ENCODE measurements at regions of chr6 and their contacts with region 1.

Region 1: GRCh38 chr6:111709615-111710398 is 104.1 kb upstream of the TRAF3IP2 start:
- DNase-seq: peak; percentile 70
- ATAC-seq: peak; percentile 82
- H3K4me3 Mint-ChIP-seq: no peak overlapping the region
- H3K27ac Mint-ChIP-seq: peak overlapping the region; percentile 73
- H3K4me1 Mint-ChIP-seq: peaks cover 47% of the 10 kb centered on the region
- H3K27me3 Mint-ChIP-seq: no peaks in the 10 kb centered on the region

Region 2: DNA sequence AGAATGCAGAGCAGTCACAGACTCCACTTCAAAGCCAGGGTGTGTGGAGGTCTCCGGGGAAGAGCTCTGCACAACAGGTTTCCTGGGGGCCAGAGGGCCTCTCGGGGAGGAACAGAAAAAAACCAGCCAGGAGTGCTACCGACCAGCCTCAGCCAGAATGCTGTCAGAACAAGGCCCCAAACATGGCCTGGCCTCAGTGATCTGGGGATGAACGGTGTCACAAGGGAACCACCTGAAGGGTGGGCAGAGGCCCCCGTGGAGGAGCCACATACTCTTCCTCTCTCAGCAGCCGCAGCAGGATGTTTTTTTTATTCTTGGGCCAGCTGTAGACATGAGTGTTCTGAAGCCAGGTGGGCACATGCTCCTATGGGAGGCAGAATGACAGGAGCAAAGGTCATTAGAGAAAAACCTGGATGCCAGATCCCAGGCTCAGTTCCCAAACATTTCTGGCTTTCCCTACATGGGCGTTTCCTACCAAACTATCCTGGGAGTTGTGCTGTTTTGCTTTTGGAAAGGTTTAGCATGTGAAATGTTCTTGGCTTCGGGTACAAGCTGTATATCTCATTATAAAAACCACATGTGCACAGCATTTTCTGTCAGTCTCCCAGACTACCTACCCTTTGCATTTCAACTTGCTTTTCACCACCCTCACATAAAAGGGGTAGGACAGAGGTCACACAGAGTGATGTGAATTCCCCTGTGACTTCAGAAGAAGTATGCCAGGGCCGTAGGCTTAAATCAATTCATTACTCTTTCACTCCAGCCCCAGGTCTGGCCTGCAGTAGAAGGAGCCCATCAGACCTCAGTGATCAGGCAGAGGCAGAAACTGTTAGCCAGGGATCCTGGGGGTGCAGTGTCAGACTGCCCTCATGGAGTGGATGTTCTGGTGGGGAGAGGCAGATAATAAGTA is 150.4 kb before region 1 on chr6:
- CTCF ChIA-PET with region 1: no interaction called
- DNase-seq: no peak
- ATAC-seq: no peak
- H3K4me3 Mint-ChIP-seq: no peak overlapping the region
- H3K27ac Mint-ChIP-seq: no peak overlapping the region
- H3K4me1 Mint-ChIP-seq: peaks cover 11% of the 10 kb centered on the region
- H3K27me3 Mint-ChIP-seq: no peaks in the 10 kb centered on the region

Region 3: GRCh38 chr6:111721753-111722154 is 11.9 kb after region 1 on chr6:
- CTCF ChIA-PET with region 1: interaction called, 14 read pairs
- DNase-seq: peak; percentile 68
- ATAC-seq: no peak
- H3K4me3 Mint-ChIP-seq: no peak overlapping the region
- H3K27ac Mint-ChIP-seq: peak overlapping the region; percentile 62
- H3K4me1 Mint-ChIP-seq: peaks cover 70% of the 10 kb centered on the region
- H3K27me3 Mint-ChIP-seq: no peaks in the 10 kb centered on the region

Region 4: DNA sequence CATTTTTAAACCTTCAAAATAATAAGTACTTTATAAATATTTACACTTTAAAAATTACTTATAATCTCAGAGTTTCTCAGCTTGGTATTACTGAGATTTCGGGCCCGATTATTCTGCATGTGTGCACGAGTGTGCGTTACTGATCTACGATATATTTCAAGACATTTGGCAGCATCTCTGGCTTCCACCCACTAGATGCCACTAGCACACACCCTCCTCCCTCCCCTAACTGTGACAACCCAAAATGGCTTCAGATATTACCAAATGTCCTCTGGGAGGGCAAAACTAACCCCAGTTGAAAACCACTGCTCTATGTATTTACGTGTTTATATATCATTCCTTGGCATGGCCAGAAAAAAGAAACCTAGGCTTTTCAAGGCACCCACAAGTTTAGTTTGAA is 67.5 kb after region 1 on chr6:
- CTCF ChIA-PET with region 1: interaction called, 12 read pairs
- DNase-seq: peak; percentile 70
- ATAC-seq: peak; percentile 46
- H3K4me3 Mint-ChIP-seq: peak overlapping the region; percentile 69
- H3K27ac Mint-ChIP-seq: peak overlapping the region; percentile 89
- H3K4me1 Mint-ChIP-seq: peaks cover 87% of the 10 kb centered on the region
- H3K27me3 Mint-ChIP-seq: no peaks in the 10 kb centered on the region

Region 5: GRCh38 chr6:111989743-111990142 is 279.9 kb after region 1 on chr6:
- CTCF ChIA-PET with region 1: interaction called, 23 read pairs
- DNase-seq: no peak
- ATAC-seq: peak; percentile 59
- H3K4me3 Mint-ChIP-seq: no peak overlapping the region
- H3K27ac Mint-ChIP-seq: peak overlapping the region; percentile 62
- H3K4me1 Mint-ChIP-seq: peaks cover 68% of the 10 kb centered on the region
- H3K27me3 Mint-ChIP-seq: no peaks in the 10 kb centered on the region

Region 6: GRCh38 chr6:111997078-111997852 is 287.5 kb after region 1 on chr6:
- CTCF ChIA-PET with region 1: interaction called, 23 read pairs
- DNase-seq: peak; percentile 87
- ATAC-seq: peak; percentile 89
- H3K4me3 Mint-ChIP-seq: peak overlapping the region; percentile 34
- H3K27ac Mint-ChIP-seq: peak overlapping the region; percentile 41
- H3K4me1 Mint-ChIP-seq: peaks cover 41% of the 10 kb centered on the region
- H3K27me3 Mint-ChIP-seq: no peaks in the 10 kb centered on the region

Region 7: DNA sequence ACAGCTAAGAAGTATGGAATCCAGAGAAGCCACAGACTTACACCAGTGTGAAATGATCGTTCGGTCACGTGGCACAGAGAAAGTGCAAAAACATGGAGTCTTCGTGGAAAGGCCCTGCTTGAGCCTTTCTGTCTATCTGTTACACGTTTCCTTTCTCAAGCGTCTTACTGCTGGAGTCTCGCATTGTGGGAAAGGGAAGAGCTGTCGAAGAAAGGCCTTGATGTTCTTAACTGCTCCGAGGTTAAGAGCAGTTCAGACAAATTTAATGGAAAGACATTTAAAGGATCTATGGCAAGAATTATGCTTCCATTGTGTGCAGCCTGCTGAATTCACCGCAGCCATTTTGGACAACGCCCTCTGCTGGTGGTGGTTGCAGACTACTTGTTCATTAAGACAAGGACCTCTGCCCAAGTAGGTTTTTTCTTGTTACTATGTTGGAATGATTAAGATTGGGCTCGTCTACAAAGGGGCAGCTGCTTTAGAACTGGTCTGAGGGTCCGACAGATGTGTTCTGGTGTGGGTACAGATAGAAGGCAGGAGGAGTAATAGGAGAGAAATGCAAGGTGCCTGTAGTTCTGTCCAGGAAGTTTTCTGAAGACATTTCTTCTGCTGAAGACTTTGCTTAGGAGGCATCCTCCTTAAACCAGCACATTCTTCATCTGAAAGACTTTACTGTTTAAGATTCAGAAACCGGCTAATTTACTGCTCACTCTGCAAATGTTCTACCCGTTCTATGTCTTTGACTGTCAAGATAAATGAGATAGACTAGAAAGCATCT is 319.4 kb after region 1 on chr6:
- CTCF ChIA-PET with region 1: interaction called, 13 read pairs
- DNase-seq: peak; percentile 81
- ATAC-seq: no peak
- H3K4me3 Mint-ChIP-seq: no peak overlapping the region
- H3K27ac Mint-ChIP-seq: peak overlapping the region; percentile 48
- H3K4me1 Mint-ChIP-seq: peaks cover 33% of the 10 kb centered on the region
- H3K27me3 Mint-ChIP-seq: peaks cover 4% of the 10 kb centered on the region

Measured in activated CD8-positive, alpha-beta memory T cell treated with anti-CD3 and anti-CD28 coated beads, Interleukin-2, amount 10 ng/mL, durations not matched to agents 7 days and 5 days (primary cell).